Mammary epithelial cell (primary cell): ENCODE measurements at regions of chr14 and their contacts with region 1.

Region 1: GRCh38 chr14:63788011-63788933 is 60.4 kb upstream of the SGPP1 start:
- DNase-seq: no peak
- H3K4me3 ChIP-seq: no peak overlapping the region
- H3K27ac ChIP-seq: no peak overlapping the region
- H3K4me1 ChIP-seq: no peaks in the 10 kb centered on the region
- H3K27me3 ChIP-seq: peaks cover 1% of the 10 kb centered on the region
- CTCF ChIP-seq: no peak

Region 2: GRCh38 chr14:62796431-62796830 is 991.8 kb before region 1 on chr14:
- CTCF ChIA-PET with region 1: no interaction called
- dilution Hi-C with region 1: no loop called
- in situ Hi-C with region 1: no loop called
- intact Hi-C with region 1: no loop called
- DNase-seq: peak; percentile 75
- H3K4me3 ChIP-seq: no peak overlapping the region
- H3K27ac ChIP-seq: no peak overlapping the region
- H3K4me1 ChIP-seq: no peaks in the 10 kb centered on the region
- H3K27me3 ChIP-seq: no peaks in the 10 kb centered on the region
- CTCF ChIP-seq: no peak

Region 3: DNA sequence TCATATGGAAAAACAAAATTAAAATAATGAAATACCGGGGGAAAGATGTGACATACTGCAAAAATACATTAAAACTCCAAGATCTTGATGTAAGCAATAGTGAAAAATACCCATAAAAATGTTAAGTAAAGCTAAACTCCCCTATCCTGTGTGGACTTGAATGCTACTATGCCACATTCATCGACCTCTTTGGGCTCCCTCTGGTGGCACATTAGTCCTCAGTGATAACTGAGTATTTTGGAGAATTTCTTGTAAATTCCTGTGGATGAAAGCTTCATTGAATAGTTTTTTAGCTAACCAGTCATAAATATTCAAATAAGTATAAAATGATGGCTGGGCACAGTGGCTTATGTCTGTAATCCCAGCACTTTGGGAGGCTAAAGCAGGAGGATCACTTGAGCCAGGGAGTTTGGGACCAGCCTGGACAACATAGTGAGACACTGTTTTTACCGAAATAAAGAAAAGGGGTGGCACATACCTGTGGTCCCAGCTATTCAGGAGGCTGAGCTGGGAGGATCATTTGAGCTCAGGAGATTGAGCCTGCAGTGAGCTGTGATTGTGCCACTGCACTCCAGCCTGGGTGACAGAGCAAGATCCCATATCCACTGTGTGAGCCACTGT is 18.0 kb before region 1 on chr14:
- CTCF ChIA-PET with region 1: no interaction called
- dilution Hi-C with region 1: no loop called
- in situ Hi-C with region 1: no loop called
- intact Hi-C with region 1: no loop called
- DNase-seq: peak; percentile 40
- H3K4me3 ChIP-seq: no peak overlapping the region
- H3K27ac ChIP-seq: no peak overlapping the region
- H3K4me1 ChIP-seq: peaks cover 11% of the 10 kb centered on the region
- H3K27me3 ChIP-seq: no peaks in the 10 kb centered on the region
- CTCF ChIP-seq: peak; percentile 54 to 72

Region 4: GRCh38 chr14:63840981-63841380 is 52.7 kb after region 1 on chr14:
- CTCF ChIA-PET with region 1: no interaction called
- dilution Hi-C with region 1: no loop called
- in situ Hi-C with region 1: no loop called
- intact Hi-C with region 1: no loop called
- DNase-seq: no peak
- H3K4me3 ChIP-seq: no peak overlapping the region
- H3K27ac ChIP-seq: no peak overlapping the region
- H3K4me1 ChIP-seq: no peaks in the 10 kb centered on the region
- H3K27me3 ChIP-seq: no peaks in the 10 kb centered on the region
- CTCF ChIP-seq: peak; percentile 17 to 29

Region 5: DNA sequence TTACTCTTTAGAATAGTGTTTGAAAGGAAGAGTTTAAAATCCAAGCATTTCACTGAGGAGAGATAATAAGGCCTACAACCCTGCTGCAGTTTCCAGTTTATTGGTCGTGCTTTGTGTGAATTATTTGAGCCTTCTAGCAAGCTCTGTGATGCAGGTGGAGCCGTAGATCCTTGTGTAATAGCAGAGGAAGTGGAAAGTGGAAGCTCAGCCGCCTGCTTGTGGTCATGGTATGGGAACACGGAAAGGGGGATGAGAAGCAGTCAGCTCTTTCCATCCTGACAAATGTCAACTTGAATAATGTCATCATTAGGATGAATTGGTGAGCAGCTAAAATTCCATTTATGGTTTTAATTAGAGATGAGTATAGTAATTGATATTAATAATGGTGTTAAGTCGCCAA is 93.7 kb after region 1 on chr14:
- CTCF ChIA-PET with region 1: no interaction called
- dilution Hi-C with region 1: loop called (anchors 5 kb)
- in situ Hi-C with region 1: no loop called
- intact Hi-C with region 1: no loop called
- DNase-seq: no peak
- H3K4me3 ChIP-seq: no peak overlapping the region
- H3K27ac ChIP-seq: no peak overlapping the region
- H3K4me1 ChIP-seq: peaks cover 2% of the 10 kb centered on the region
- H3K27me3 ChIP-seq: no peaks in the 10 kb centered on the region
- CTCF ChIP-seq: no peak

Region 6: GRCh38 chr14:64279704-64280668 is 491.7 kb after region 1 on chr14:
- CTCF ChIA-PET with region 1: no interaction called
- dilution Hi-C with region 1: loop called (anchors 10 kb)
- in situ Hi-C with region 1: no loop called
- intact Hi-C with region 1: no loop called
- DNase-seq: peak; percentile 65
- H3K4me3 ChIP-seq: no peak overlapping the region
- H3K27ac ChIP-seq: no peak overlapping the region
- H3K4me1 ChIP-seq: no peaks in the 10 kb centered on the region
- H3K27me3 ChIP-seq: no peaks in the 10 kb centered on the region
- CTCF ChIP-seq: no peak